Ovary (tissue), 10 donors: ENCODE measurements at regions of chr4 and their contacts with region 1.

Region 1: GRCh38 chr4:43766648-43767047 is 682.0 kb downstream of the KCTD8 start:
- DNase-seq: no peak
- H3K4me3 ChIP-seq: no peak overlapping the region
- H3K27ac ChIP-seq: no peak overlapping the region
- H3K4me1 ChIP-seq: no peaks in the 10 kb centered on the region
- H3K27me3 ChIP-seq: no peaks in the 10 kb centered on the region
- CTCF ChIP-seq: no peak
- EP300 ChIP-seq: no peak
- POLR2A ChIP-seq: no peak

Region 2: DNA sequence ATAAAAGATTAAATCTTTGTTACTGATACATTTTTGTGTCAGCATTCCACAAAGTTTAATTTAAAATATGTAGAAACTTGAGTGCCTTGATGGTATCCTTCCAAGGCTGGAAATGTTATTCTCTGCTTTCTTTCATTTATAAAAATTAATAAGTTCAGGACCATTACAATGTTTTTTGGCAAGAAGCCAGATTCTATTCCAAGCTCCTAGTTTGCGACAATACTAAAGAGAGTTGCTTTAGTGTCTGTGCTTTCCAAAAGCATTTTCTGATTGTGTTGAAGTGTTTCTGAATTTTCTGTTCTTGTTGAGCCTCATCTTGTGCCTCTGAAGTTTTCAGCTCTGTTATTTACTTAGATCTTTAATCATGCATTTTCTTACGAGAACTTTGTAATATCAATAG is 165.8 kb after region 1 on chr4:
- intact Hi-C with region 1: loop called in 1 of 4 experiments (anchors 5 kb)
- DNase-seq: no peak
- H3K4me3 ChIP-seq: no peak overlapping the region
- H3K27ac ChIP-seq: no peak overlapping the region
- H3K4me1 ChIP-seq: no peaks in the 10 kb centered on the region
- H3K27me3 ChIP-seq: no peaks in the 10 kb centered on the region
- CTCF ChIP-seq: no peak
- EP300 ChIP-seq: no peak
- POLR2A ChIP-seq: no peak